Mammary epithelial cell (primary cell): ENCODE measurements at regions of chr5 and their contacts with region 1.

Region 1: DNA sequence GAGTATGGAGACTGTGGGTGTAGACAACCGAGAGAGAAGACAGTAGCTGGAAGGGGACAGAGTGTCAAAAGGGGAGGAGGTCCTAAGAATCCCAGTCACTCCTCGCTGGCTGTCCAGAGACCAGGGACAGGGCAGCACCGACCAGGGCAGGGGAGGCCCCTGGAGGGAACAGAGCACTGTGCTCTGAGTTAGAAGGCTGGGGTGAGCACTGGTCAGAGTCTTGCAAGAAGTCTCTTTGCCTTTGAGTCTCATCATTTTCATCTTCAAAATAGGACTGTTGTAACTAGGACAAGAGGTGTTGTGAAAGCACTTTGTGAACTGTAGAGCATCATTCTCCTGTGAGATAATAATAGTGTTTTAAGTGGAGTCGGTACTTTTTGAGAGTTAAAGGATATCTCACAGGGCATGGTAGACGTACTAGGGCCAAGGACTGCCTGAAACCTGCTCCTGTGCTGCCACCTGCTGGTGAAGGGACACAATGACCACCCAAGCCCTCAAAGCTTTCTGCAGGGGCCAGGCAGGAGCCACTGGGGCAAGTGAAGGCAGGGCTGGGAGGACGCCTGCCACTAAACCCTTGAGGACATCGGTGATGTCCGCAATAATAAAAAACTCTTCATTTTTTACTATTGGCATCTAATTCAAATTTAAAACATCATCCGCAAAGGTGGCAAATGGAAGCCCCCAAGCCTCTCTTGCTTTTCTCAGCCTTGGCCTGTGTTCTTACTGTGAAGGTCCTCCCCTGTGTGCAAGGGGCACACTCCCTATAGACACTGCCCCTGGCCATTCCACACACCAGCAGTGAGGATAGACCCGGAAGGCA is 28.2 kb downstream of the SLC6A7 start:
- DNase-seq: peak; percentile 59
- H3K4me3 ChIP-seq: no peak overlapping the region
- H3K27ac ChIP-seq: no peak overlapping the region
- H3K4me1 ChIP-seq: no peaks in the 10 kb centered on the region
- H3K27me3 ChIP-seq: no peaks in the 10 kb centered on the region
- CTCF ChIP-seq: peak; percentile 82 to 83

Region 2: DNA sequence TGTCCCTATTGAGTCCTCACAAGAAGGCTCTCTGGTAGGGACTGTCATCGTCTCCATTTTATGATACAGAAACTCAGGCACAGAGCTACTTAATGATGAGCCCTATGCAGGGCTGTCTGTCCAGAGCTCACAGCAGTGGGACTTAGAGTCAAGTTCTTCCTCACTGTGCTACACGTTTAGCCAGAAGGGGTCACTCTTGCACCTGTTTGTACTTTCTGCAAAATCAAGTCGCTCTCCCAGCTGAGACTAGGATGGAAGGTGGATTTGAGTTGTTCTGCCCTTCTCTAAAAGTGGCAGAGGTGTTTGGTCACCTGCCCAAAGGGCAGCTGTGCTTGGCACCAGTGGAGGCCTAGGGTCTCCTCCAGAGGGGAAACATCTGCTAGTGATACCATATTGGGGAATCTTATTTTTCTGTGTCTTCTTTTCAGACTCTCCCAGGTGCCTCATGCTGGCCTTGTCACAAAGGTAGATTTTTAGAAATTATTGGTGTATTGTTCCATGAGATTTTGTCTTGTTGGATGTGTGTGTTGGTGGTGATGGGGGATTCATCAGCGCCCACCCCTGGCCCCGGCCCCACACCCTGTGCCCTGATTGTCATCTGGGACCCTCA is 383.7 kb before region 1 on chr5:
- CTCF ChIA-PET with region 1: no interaction called
- dilution Hi-C with region 1: no loop called
- in situ Hi-C with region 1: loop called (anchors 25 kb)
- intact Hi-C with region 1: loop called (anchors 1 kb)
- DNase-seq: peak; percentile 62
- H3K4me3 ChIP-seq: no peak overlapping the region
- H3K27ac ChIP-seq: no peak overlapping the region
- H3K4me1 ChIP-seq: peaks cover 8% of the 10 kb centered on the region
- H3K27me3 ChIP-seq: no peaks in the 10 kb centered on the region
- CTCF ChIP-seq: peak; percentile 75 to 79

Region 3: GRCh38 chr5:149990518-149991376 is 227.3 kb before region 1 on chr5:
- CTCF ChIA-PET with region 1: interaction called, 4 read pairs
- dilution Hi-C with region 1: no loop called
- in situ Hi-C with region 1: no loop called
- intact Hi-C with region 1: loop called (anchors 5 kb)
- DNase-seq: peak; percentile 57
- H3K4me3 ChIP-seq: no peak overlapping the region
- H3K27ac ChIP-seq: no peak overlapping the region
- H3K4me1 ChIP-seq: no peaks in the 10 kb centered on the region
- H3K27me3 ChIP-seq: no peaks in the 10 kb centered on the region
- CTCF ChIP-seq: peak; percentile 96 to 97

Region 4: DNA sequence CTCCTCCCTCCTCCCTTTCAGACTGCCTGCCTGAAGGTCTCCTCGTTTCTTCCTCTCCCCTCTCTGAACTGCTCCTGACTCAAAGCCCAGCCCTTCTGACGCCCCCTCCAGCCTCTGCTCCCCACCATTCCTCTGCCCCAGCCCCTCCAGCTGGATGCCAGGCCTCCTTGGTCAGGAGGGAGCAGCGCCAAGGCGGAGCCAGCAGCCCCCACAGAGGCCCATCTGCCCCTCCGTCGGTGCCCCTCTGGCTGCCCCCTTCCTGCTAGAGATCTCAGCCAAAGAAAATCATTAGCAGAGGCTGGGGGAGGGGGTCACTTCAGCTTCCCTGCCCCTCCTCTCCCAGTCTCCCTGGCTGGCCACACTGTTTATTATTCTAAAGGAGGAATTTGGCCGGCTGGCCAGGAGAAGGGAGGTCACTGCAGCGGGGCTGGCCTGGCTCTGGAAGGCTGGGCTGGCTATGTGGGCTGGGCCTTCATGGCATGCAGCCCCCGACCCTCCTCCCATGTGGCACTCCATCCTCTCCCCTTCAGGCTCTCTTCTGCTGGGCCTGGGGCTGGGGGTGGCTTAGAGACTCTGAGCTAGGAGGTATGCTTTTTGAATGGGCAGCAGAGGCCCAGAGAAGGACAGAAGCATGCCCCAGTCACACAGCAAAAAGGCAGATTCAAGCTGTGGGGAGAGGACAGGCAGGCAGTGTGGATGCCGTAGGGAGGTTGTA is 79.4 kb before region 1 on chr5:
- CTCF ChIA-PET with region 1: no interaction called
- dilution Hi-C with region 1: no loop called
- in situ Hi-C with region 1: no loop called
- intact Hi-C with region 1: no loop called
- DNase-seq: no peak
- H3K4me3 ChIP-seq: no peak overlapping the region
- H3K27ac ChIP-seq: no peak overlapping the region
- H3K4me1 ChIP-seq: peaks cover 11% of the 10 kb centered on the region
- H3K27me3 ChIP-seq: no peaks in the 10 kb centered on the region
- CTCF ChIP-seq: no peak

Region 5: DNA sequence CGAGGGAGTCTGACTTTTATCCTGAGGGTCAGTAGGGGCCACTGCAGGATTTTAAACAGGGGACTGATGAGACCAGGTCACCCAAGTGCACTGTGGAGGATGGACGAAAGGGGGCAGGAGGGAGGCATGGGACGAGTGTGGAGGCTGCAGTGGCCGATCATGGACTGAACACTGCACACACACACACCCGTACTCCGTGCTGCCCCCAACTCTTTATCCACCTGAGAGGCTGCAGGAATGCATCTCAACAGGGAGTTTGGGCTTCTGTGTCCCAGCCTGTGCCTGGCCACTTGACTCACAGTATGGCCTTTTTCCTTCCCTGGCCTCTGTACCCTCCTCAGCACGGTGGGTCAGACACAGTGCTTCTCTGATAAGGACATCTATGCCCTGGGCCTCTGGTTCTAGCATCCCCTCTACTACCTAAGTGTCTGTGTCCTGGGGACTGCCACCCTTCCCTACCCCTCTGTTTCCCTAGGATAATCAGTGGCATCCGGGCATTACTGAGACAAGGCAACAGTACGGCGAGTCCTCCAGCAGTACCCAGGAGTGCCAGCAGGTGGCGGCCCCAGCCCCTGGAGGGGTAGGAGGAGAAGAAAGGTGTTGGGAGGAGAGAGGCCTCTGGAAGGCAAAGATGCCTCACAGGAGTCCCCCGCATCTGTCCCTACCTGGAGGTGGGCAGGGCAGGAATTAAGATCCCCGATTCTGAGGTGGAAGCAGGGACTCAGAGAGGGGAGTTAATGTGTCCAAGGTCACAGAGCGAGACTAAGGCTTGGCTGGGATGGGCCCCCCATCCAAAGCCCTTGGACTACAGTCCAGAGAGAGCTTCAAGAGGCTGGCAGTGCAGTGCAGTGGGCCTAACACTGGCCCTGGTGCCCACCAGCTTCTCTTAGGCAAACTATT is 56.6 kb before region 1 on chr5:
- CTCF ChIA-PET with region 1: no interaction called
- dilution Hi-C with region 1: no loop called
- in situ Hi-C with region 1: no loop called
- intact Hi-C with region 1: loop called (anchors 1 kb)
- DNase-seq: peak; percentile 55
- H3K4me3 ChIP-seq: no peak overlapping the region
- H3K27ac ChIP-seq: no peak overlapping the region
- H3K4me1 ChIP-seq: no peaks in the 10 kb centered on the region
- H3K27me3 ChIP-seq: no peaks in the 10 kb centered on the region
- CTCF ChIP-seq: peak; percentile 96 to 98

Region 6: DNA sequence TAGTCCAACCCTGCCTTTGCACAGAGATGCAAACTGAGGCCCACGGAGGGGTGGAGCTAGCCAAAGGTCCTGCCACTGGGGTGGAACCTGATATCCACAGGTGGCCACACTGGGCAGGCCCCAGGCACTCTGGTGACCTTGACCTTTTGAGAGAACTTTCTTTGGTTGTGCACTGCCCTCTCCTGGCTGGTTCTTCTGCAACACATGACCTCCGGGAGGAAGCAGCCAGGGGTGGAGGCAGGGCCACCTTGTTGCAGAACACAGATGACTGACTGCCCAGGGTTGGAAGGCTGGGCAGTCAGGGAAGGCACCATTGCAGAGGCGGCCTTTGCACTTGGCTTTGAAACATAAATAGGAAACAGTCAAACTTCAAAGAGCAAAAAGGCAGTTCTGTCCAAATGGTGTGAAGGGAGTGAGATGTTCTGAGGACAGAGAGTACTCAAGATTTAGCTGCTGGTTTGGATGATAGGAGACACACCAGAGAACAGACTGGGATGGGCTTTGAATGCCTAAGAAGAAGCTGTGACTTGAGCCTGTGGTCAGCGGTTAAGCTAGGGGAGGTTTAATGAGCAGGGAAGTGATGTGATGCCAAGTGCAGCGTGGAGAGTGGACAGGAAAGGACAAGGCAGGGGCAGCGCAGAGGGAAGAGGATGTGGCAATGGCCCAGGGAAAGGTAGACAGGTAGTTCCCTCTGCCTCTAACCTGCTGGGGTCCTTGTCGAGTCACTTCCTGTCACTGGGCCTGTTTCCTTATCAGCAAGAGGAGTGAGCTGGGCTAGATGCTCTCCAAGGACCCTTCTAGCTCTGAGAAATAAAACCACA is 132.7 kb after region 1 on chr5:
- CTCF ChIA-PET with region 1: no interaction called
- dilution Hi-C with region 1: no loop called
- in situ Hi-C with region 1: no loop called
- intact Hi-C with region 1: loop called (anchors 1 kb)
- DNase-seq: peak; percentile 55
- H3K4me3 ChIP-seq: no peak overlapping the region
- H3K27ac ChIP-seq: no peak overlapping the region
- H3K4me1 ChIP-seq: peaks cover 10% of the 10 kb centered on the region
- H3K27me3 ChIP-seq: no peaks in the 10 kb centered on the region
- CTCF ChIP-seq: peak; percentile 57 to 84